ENCODE measurements at regions of chr1 and their contacts with region 1.

Region 1: DNA sequence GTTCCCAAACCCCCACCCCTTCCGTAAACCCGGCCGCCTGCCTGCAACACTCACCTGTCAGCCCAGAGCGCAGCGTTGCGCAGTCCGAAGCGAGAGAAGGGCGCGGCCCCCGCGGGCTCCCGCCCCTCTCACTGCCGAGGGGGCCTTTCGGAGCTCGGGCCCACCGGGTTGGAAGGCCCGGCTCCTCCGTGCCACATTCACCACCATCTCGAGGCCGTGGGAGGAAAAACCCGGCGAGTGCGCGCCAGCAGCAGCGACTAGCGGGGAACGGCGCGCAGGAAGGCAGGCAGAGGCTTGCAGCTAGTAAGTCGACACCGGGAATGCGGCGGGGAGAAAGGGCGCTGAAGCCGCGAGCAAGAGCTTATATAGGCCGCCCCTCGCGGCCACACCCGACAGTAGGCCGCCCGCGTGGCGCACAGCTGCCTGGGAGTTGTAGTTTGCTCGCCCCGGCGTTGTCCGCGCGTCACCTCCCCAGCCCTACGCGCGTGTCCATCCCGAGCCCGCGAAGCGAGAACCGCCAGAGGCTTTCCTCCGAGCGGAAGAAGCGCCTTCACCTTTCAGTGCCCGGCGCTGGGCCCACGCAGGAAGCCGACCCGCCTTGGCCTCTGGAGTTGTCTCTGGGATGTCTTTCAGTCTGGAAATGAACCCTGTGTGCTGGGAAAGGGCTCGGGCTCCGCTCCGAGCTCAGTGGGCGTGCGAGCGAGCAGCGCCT is 10.4 kb upstream of the RAB42 start:
- DNase-seq: peak; percentile 84 to 95 (median 90)
- ATAC-seq: peak; percentile 88
- H3K4me3 Mint-ChIP-seq: peak overlapping the region; percentile 93 to 99 (median 96)
- H3K27ac Mint-ChIP-seq: peak overlapping the region; percentile 87 to 97 (median 96)
- H3K4me1 Mint-ChIP-seq: peaks cover 16 to 50% (median 42%) of the 10 kb centered on the region in 4 donors
- H3K27me3 Mint-ChIP-seq: no peaks in the 10 kb centered on the region

Region 2: DNA sequence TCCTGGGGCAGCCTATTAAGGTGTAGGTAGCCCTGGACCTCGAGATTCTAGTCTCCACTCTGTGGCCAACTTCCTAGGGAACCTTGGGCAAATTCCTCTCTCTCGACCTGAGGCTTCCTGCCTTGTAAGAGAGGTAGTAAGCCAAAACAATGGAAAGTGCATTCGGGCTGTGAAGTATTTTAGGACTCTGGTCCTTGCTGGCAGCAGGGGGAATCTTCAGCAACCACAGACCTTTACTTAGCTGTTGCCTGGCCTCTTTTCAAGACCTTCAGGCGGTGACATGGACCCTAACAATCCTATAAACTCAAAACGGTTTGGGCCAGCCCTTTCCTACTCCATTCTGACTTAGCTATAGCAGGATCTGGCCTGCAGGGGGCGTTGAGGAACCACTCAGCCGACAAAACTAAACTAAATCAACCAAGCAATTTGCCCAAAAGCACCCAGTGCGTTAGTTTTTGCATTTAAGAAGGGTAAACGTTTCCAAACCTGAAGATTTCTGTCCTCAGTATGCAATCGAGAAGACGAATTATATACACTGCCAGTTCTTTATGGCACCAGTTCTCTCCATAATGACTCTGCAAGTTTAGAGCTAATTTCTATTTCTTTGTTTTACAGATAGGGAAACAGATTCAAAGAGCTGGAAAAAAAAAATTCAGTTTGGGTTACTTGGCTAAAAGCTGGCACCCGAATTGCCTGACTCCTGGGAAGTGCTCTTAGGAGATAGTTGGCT is 333.2 kb before region 1 on chr1:
- POLR2A ChIA-PET with region 1: interaction called, 13 read pairs
- DNase-seq: peak; percentile 61 to 89 (median 78)
- ATAC-seq: peak in 1 of 2 donors; percentile 18
- H3K4me3 Mint-ChIP-seq: peak overlapping the region; percentile 68 to 98 (median 84)
- H3K27ac Mint-ChIP-seq: peak overlapping the region; percentile 92 to 98 (median 94)
- H3K4me1 Mint-ChIP-seq: peaks cover 23 to 59% (median 47%) of the 10 kb centered on the region in 4 donors
- H3K27me3 Mint-ChIP-seq: no peaks in the 10 kb centered on the region

Region 3: GRCh38 chr1:28437934-28438699 is 143.6 kb before region 1 on chr1:
- POLR2A ChIA-PET with region 1: no interaction called
- DNase-seq: no peak
- ATAC-seq: no peak
- H3K4me3 Mint-ChIP-seq: peak overlapping the region in 1 of 10 donors; percentile 24
- H3K27ac Mint-ChIP-seq: peak overlapping the region in 6 of 10 donors; percentile 3 to 82 (median 28)
- H3K4me1 Mint-ChIP-seq: peaks cover 4 to 13% (median 10%) of the 10 kb centered on the region in 4 donors
- H3K27me3 Mint-ChIP-seq: no peaks in the 10 kb centered on the region

Region 4: DNA sequence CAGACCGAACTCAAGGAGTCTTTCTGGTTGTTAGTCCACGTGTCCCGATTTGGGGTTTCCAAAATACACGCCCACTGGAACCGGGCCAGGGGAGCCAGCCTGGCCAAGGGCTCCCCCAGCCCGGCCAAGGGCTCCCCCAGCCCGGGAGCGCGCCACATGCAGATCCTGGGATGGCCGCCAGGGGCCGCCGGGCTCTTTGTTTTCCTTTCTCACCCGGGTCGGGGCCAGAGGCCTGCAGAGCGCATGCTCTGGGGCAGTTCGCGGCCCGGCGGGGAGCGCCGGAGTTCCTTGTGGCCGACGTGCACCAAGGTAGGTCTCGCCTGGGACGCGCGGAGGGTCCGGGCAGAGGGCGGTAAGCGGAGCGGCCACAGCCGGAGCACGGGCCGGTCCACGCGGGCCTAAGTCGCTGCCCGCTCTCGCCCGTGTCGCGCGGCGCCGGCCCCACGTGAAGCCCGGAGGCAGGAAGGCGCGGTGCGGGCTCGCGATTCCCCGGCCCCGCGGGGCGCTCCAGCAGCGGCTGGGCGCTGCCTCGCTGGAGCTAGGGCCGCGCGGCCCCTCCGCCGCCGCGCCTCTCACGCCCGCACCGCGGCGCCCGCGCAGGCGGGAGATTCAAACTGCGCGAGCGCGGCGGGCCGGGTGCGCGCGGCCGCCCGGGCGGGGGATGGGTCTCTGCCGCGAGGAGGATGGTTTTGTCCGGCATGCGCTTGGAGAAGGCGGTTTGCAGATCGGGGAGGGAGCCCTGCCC is 63.5 kb before region 1 on chr1:
- POLR2A ChIA-PET with region 1: interaction called, 15 read pairs
- DNase-seq: peak; percentile 77 to 92 (median 86)
- ATAC-seq: peak; percentile 87
- H3K4me3 Mint-ChIP-seq: peak overlapping the region; percentile 81 to 92 (median 88)
- H3K27ac Mint-ChIP-seq: peak overlapping the region in 9 of 10 donors; percentile 66 to 94 (median 84)
- H3K4me1 Mint-ChIP-seq: peaks cover 14 to 41% (median 32%) of the 10 kb centered on the region in 4 donors
- H3K27me3 Mint-ChIP-seq: no peaks in the 10 kb centered on the region

Region 5: DNA sequence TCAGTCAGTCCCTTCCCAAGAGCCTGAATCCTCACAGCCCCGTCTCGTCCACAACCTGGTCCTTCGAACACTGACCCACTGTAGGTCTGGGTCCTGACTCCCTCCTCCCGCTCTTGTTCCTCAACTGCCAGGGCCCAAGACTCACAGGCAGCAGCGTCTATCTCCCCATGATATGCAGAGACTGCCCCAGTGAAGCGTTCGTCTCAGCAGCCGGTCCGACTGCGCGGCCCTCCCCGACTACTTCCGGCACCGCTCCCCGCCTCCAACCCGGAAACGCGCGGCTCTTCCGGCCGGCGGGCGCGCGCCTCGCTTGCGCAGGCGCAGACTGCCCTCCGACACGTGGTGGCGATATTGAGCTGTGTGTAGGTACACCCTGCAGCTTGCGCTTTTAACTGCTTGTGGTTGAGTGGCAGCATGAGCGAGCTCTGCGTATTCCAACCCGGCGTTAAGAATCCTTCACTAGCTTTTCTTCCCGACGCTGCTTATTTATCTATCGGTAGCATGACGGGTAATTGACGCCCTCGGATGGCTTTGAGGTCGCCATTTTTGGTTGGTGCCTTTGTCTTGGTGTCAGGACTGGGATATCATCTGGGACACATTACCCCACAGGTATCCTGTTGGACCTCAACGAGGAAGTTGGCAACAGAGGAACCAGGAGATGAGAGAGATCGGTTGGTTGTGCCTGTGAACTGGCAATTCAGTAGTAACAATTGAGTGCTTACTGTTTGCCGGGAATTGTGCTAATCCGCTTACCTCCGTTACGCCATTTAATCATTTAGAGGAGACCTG is 61.3 kb after region 1 on chr1 and contains the start of gene TAF12:
- POLR2A ChIA-PET with region 1: interaction called, 50 read pairs
- DNase-seq: peak; percentile 78 to 95 (median 90)
- ATAC-seq: peak; percentile 85 to 86
- H3K4me3 Mint-ChIP-seq: peak within 1 kb of the TSS; percentile 96 to 100 (median 99)
- H3K27ac Mint-ChIP-seq: peak within 1 kb of the TSS; percentile 96 to 99 (median 98)
- H3K4me1 Mint-ChIP-seq: peaks cover 24 to 71% (median 57%) of the 10 kb centered on the region in 4 donors
- H3K27me3 Mint-ChIP-seq: no peaks in the 10 kb centered on the region
- polyA plus RNA-seq, gene TAF12: 42.4 to 50.1 (median 47.3) TPM

Region 6: DNA sequence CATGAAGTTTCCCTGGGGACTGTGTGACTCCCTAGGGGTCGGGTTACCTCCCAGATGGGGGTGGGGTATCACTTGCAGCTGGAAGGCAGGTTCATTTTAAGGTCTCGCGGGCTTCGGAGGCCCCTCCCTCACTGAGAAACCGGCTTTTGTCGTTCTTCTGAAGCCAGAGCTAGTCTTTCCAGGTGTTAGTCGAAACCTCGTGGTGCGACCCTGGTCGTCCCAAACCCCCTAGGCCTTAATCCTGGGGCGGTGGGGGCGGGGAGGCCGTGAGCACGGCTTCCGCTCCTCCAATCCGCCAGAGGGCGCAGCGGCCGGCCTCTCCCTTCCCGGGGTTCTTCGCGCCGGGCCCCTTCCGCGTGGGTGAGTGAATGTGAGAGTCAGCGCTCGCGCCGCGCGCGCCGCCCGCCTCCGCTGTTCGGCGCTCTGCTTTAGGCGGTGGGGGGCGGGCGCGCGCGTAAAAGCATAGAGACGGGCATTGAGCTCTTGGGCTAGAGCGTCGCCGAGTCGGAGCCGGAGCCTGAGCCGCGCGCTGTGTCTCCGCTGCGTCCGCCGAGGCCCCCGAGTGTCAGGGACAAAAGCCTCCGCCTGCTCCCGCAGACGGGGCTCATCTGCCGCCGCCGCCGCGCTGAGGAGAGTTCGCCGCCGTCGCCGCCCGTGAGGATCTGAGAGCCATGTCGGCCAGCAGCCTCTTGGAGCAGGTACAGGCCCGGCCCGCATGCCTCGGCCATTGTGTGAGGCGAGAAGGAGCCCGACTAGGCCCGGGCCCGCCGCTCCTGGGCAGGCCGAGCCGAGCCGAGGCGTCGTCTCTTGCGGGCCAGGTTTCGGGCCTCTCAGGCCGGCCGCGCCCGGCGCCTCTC is 155.0 kb after region 1 on chr1 and contains the start of gene YTHDF2:
- POLR2A ChIA-PET with region 1: interaction called, 30 read pairs
- DNase-seq: peak; percentile 93 to 99 (median 98)
- ATAC-seq: peak; percentile 92 to 93
- H3K4me3 Mint-ChIP-seq: peak within 1 kb of the TSS; percentile 91 to 100 (median 96)
- H3K27ac Mint-ChIP-seq: peak within 1 kb of the TSS; percentile 93 to 99 (median 96)
- H3K4me1 Mint-ChIP-seq: peaks cover 10 to 43% (median 38%) of the 10 kb centered on the region in 4 donors
- H3K27me3 Mint-ChIP-seq: no peaks in the 10 kb centered on the region
- polyA plus RNA-seq, gene YTHDF2: 117 to 128 (median 118) TPM

Region 7: GRCh38 chr1:29117381-29117780 is 535.7 kb after region 1 on chr1:
- POLR2A ChIA-PET with region 1: no interaction called
- DNase-seq: no peak
- ATAC-seq: no peak
- H3K4me3 Mint-ChIP-seq: no peak overlapping the region
- H3K27ac Mint-ChIP-seq: peak overlapping the region in 2 of 10 donors; percentile 41 to 72
- H3K4me1 Mint-ChIP-seq: peaks cover 0 to 2% (median 0%) of the 10 kb centered on the region in 4 donors
- H3K27me3 Mint-ChIP-seq: peaks cover 0 to 1% (median 0%) of the 10 kb centered on the region in 5 donors